HEK293T (cell line): ENCODE measurements at regions of chr12 and their contacts with region 1.

Region 1: DNA sequence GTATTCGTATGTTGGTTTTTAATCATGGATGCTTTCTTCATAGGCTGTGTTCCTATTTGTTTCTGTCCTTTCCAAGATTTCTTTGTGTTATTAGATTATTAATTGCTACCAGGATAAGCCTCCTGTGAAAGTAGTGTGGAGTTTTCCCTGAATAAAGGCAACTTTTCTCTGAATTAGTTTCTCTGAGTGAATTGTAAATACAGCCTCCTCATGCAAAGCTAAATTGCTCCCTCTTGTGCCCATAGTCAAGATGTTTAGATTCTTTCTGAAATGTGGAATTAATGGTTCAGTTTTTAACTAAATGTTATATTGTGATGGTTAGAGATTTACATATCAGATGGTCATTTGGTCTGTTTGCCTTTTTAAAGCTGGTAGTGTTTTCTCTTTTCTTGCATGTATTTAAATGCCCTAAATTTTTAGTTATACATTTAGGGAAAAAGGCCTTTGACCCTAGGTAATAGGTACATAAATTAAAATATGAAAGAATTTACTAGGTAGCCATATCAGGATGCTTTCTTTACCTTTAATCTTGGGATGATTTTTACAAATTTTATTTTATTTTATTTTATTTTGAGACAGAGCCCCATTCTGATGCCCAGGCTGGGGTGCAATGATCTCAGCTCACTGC is 8.9 kb downstream of the APAF1 start:
- DNase-seq: peak; percentile 34

Region 2: GRCh38 chr12:98572010-98572409 is 82.0 kb before region 1 on chr12:
- CTCF ChIA-PET with region 1: interaction called, 11 read pairs
- POLR2A ChIA-PET with region 1: no interaction called
- DNase-seq: peak; percentile 48

Region 3: GRCh38 chr12:98698603-98699463 is 44.9 kb after region 1 on chr12:
- CTCF ChIA-PET with region 1: interaction called, 10 read pairs
- POLR2A ChIA-PET with region 1: no interaction called
- DNase-seq: peak; percentile 62